A549 (cell line): ENCODE measurements at regions of chr17 and their contacts with region 1.

Region 1: GRCh38 chr17:46940621-46941404 is 17.9 kb downstream of the GOSR2 start:
- DNase-seq: peak; percentile 84 to 97
- ATAC-seq: peak; percentile 74 to 85
- H3K4me3 ChIP-seq: no peak overlapping the region
- H3K27ac ChIP-seq: peak overlapping the region in 1 of 2 experiments; percentile 46; a peak in 2 of 6 replicates
- H3K4me1 ChIP-seq: no peaks in the 10 kb centered on the region
- CTCF ChIP-seq: peak; percentile 95
- EP300 ChIP-seq: no peak
- POLR2A ChIP-seq: no peak
- RAD21 ChIP-seq: peak; percentile 85 to 91

Region 2: DNA sequence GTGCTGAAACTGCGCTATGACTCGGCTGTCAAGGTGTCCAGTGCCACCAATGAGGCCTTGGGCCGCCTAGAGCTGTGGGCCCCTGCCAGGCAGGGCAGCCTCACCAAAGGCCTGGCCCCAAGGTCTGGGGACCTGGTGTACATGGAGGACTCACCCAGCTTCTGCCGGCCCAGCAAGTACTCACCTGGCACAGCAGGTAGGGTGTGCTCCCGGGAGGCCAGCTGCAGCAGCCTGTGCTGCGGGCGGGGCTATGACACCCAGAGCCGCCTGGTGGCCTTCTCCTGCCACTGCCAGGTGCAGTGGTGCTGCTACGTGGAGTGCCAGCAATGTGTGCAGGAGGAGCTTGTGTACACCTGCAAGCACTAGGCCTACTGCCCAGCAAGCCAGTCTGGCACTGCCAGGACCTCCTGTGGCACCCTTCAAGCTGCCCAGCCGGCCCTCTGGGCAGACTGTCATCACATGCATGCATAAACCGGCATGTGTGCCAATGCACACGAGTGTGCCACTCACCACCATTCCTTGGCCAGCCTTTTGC is 64.4 kb before region 1 on chr17:
- CTCF ChIA-PET with region 1: interaction called, 11 read pairs
- POLR2A ChIA-PET with region 1: no interaction called
- DNase-seq: peak in 1 of 2 experiments; percentile 51
- ATAC-seq: peak; percentile 81 to 92
- H3K4me3 ChIP-seq: no peak overlapping the region
- H3K27ac ChIP-seq: no peak overlapping the region
- H3K4me1 ChIP-seq: peaks cover 2% of the 10 kb centered on the region; the same call in 2 of the 3 replicates
- CTCF ChIP-seq: peak; percentile 34
- EP300 ChIP-seq: no peak
- POLR2A ChIP-seq: no peak
- RAD21 ChIP-seq: peak in 1 of 2 experiments; percentile 39; a peak in 2 of 5 replicates

Region 3: GRCh38 chr17:46922804-46923635 is 17.8 kb before region 1 on chr17 and contains the start of gene GOSR2:
- CTCF ChIA-PET with region 1: interaction called, 68 read pairs
- POLR2A ChIA-PET with region 1: no interaction called
- DNase-seq: peak; percentile 94 to 95
- ATAC-seq: peak; percentile 99
- H3K4me3 ChIP-seq: peak within 1 kb of the TSS; percentile 92
- H3K27ac ChIP-seq: peak within 1 kb of the TSS; percentile 91 to 94
- H3K4me1 ChIP-seq: peaks cover 17% of the 10 kb centered on the region
- CTCF ChIP-seq: no peak
- EP300 ChIP-seq: no peak
- POLR2A ChIP-seq: peak; percentile 86
- RAD21 ChIP-seq: no peak
- polyA plus RNA-seq, gene GOSR2: 68.3 and 71.2 TPM in 2 replicates

Region 4: DNA sequence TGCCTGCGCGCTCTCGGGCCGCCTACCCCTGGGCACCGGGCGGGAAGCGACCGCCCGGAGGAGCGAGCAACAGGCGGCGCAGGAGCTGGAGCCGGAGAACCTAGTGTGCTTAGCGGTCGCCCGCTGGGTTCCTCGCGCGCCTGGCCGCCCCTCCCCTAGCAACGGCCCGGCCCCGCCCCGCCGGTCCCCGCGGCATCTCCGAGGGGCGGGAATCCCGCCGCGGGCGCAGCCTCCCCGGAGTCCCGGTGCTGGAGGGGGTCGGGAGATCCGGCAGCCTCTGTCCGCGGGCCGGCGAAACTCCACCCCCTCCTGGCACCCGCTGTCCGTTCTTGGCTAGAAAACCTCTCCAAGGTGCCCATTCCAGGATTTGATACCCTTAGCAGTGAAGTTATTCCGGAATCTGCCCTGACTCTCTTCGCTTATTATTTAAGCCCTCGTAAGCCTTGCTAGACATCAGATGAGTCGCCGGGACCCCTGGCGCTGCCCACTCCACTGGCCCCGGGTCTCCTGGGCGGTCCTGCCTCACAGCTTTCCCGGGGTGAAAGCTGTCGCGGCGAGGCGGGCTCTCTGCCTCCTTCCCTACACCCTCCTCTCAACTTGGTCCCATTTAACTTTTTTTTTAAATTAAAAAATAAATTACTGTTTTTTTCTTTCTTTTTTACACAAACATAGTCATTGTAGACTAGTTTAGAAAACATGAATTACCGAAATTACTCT is 38.5 kb after region 1 on chr17 and contains the start of gene RPRML:
- CTCF ChIA-PET with region 1: interaction called, 460 read pairs
- POLR2A ChIA-PET with region 1: no interaction called
- DNase-seq: peak; percentile 25 to 54
- ATAC-seq: peak; percentile 69 to 82
- H3K4me3 ChIP-seq: peak within 1 kb of the TSS; percentile 60
- H3K27ac ChIP-seq: peak within 1 kb of the TSS; percentile 48 to 80; a peak in 5 of 6 replicates
- H3K4me1 ChIP-seq: 0 out of 3 replicates have a peak, but pooled peaks cover 2% of the 10 kb centered on the region
- CTCF ChIP-seq: no peak
- EP300 ChIP-seq: no peak
- POLR2A ChIP-seq: no peak
- RAD21 ChIP-seq: no peak
- polyA plus RNA-seq, gene RPRML: 0.10 TPM in 1 of 2 replicates, not detected in the other

Region 5: GRCh38 chr17:46995841-46996571 is 55.2 kb after region 1 on chr17:
- CTCF ChIA-PET with region 1: interaction called, 90 read pairs
- POLR2A ChIA-PET with region 1: no interaction called
- DNase-seq: no peak
- ATAC-seq: peak; percentile 40 to 46; a peak in 3 of 6 replicates
- H3K4me3 ChIP-seq: no peak overlapping the region
- H3K27ac ChIP-seq: no peak overlapping the region
- H3K4me1 ChIP-seq: peaks cover 3% of the 10 kb centered on the region; the same call in 1 of the 3 replicates
- CTCF ChIP-seq: no peak
- EP300 ChIP-seq: no peak
- POLR2A ChIP-seq: no peak
- RAD21 ChIP-seq: no peak

Region 6: DNA sequence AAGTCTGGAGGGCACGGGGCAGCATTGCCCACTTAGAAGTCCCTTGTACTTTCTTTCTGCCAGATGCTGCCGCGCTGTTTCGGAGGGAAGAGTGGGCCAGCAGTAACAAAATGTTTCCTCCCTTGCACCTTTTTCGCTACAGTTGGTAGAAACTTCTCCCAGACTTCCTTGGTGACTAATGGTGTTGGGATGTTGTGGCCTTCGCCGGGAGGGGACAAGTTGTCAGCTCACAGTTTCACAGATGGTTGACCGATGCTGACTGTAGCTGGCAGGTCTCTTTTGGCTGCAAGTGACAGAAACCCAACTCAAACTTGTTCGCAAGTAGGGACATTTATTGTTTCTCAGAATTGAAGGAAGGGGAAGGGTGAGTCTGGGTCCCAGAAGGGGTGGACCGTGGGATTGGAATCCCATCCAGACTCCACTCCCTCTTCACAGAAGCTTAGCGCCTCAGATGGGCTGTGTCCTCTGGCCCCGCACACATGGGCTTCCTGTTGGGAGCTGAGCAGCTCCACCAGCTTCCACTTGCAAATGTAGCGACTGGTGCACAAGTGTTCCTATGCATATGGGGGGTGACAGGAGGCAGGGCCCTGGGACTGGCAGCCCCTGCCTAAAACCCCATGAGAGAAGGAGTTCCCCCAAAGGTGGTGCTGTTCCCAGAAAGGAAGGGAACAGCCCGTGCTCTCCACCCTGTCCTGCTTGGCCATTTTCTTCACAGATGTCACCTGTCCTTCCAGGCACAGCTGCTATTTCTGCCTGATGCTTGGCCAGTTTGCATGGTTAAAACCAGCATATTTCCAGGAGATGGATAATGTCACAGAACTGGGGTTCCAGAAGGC is 69.2 kb after region 1 on chr17:
- CTCF ChIA-PET with region 1: interaction called, 90 read pairs
- POLR2A ChIA-PET with region 1: no interaction called
- DNase-seq: no peak
- ATAC-seq: peak in 1 of 2 experiments; percentile 30; a peak in 1 of 6 replicates
- H3K4me3 ChIP-seq: no peak overlapping the region
- H3K27ac ChIP-seq: no peak overlapping the region
- H3K4me1 ChIP-seq: no peaks in the 10 kb centered on the region
- CTCF ChIP-seq: no peak
- EP300 ChIP-seq: no peak
- POLR2A ChIP-seq: no peak
- RAD21 ChIP-seq: no peak

Region 7: GRCh38 chr17:47066841-47067682 is 126.2 kb after region 1 on chr17:
- CTCF ChIA-PET with region 1: no interaction called
- POLR2A ChIA-PET with region 1: no interaction called
- DNase-seq: peak; percentile 96 to 99
- ATAC-seq: peak; percentile 97 to 98
- H3K4me3 ChIP-seq: peak overlapping the region; percentile 57
- H3K27ac ChIP-seq: peak overlapping the region; percentile 86 to 98
- H3K4me1 ChIP-seq: peaks cover 27% of the 10 kb centered on the region
- CTCF ChIP-seq: no peak
- EP300 ChIP-seq: no peak
- POLR2A ChIP-seq: peak; percentile 94
- RAD21 ChIP-seq: peak in 1 of 2 experiments; percentile 32; a peak in 1 of 5 replicates

Region 8: DNA sequence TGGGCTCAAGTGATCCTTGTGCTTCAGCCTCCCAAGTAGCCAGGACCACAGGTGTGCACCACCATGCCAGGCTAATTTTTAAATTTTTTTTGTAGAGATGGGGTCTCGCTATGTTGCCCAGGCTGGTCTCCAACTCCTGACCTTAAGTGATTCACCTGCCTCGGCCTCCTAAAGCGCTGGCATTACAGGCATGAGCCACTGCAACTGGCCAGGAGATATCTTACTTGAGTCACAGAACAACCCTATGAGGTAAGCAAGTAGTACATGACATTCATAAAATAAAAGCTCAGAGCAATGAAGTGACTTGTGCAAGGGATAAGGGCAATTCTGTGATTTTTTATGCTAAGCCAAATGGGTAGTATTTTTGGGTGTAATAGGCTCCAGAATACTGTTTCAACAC is 190.9 kb after region 1 on chr17:
- CTCF ChIA-PET with region 1: no interaction called
- POLR2A ChIA-PET with region 1: no interaction called
- DNase-seq: peak in 1 of 2 experiments; percentile 23
- ATAC-seq: no peak
- H3K4me3 ChIP-seq: no peak overlapping the region
- H3K27ac ChIP-seq: no peak overlapping the region
- H3K4me1 ChIP-seq: no peaks in the 10 kb centered on the region
- CTCF ChIP-seq: no peak
- EP300 ChIP-seq: no peak
- POLR2A ChIP-seq: no peak
- RAD21 ChIP-seq: no peak